ENCODE measurements at regions of chr14 and their contacts with region 1.

Region 1: DNA sequence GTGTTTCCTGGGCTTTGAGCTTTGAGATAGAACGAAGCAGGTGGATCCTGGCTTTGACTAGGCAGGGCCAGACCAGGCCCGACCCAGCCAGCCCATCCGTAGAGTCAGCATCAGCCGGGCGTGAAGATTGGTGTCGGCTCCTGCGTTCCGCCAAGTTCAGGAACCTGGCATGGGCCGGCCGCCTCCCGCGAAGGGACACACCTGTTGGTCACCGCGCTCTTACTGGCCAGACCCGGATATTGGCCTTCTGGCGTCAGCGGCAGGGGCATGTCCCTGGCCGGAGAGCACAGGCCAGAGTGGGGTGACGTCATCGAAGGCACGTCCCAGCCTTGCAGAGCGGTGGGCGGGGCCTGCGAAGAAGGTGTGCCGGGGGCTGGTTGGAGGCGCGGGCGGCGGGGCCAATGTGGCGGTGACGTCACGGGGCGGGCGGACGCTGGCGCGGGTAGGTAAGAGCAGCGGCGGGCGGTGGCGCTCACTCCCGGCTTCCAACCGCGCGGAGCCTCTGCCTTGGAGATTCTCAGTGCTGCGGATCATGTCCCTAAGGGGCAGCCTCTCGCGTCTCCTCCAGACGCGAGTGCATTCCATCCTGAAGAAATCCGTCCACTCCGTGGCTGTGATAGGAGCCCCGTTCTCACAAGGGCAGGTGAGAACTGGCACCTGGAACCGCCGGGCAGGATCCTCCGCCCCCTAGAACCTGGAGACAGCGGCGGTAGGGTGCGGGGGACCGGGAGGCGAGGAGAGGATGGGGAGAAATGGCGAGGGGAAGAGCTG is at the start of gene ARG2:
- DNase-seq: peak; percentile 83
- H3K4me3 ChIP-seq: peak within 1 kb of the TSS; percentile 50 to 88 (median 63)
- H3K27ac ChIP-seq: peak within 1 kb of the TSS; percentile 77 to 88 (median 84)
- H3K4me1 ChIP-seq: peaks cover 0 to 41% (median 25%) of the 10 kb centered on the region in 3 donors
- H3K27me3 ChIP-seq: no peaks in the 10 kb centered on the region
- CTCF ChIP-seq: peak in 1 of 6 experiments; percentile 6
- POLR2A ChIP-seq: peak in 2 of 4 donors; percentile 56 to 89
- total RNA-seq, gene ARG2: 7.1 to 50.6 (median 17.7) TPM

Region 2: DNA sequence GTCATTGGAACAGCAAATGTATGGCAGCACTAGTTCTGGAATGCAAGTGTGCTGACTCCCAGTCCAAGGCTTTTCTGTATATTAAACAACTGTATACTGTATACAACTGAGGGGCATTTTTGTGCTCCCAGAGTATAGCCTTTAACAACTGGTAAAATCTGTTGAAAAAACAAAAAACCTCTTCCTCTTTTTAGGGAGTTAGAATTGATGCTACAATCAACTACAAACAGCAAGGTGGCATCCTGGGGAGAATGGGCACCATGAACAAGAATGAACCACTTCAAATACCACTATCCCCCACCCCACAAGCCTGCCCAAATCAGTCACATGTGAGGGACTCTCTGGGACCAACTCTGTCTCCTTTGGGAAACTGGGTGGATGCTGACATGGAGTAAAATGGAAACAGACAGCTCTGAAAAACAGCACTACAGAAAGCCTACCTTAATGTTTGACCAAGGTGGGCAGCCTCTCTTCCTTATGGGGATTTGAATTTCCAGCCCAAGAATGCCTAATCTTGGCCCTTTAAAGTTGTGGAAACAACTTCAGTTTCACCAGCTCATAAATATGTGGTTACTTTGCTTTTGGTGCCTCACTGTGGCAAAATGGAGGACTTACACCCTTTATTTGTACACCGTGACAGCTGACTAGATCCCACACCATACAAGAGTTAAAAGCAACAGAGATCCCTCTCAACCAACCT is 47.3 kb after region 1 on chr14:
- intact Hi-C with region 1: loop called (anchors 10 kb)
- DNase-seq: no peak
- H3K4me3 ChIP-seq: no peak overlapping the region
- H3K27ac ChIP-seq: no peak overlapping the region
- H3K4me1 ChIP-seq: peaks cover 0 to 55% (median 20%) of the 10 kb centered on the region in 3 donors
- H3K27me3 ChIP-seq: no peaks in the 10 kb centered on the region
- CTCF ChIP-seq: peak; percentile 38 to 76 (median 55)
- POLR2A ChIP-seq: no peak

Region 3: GRCh38 chr14:67704484-67705089 is 85.0 kb after region 1 on chr14:
- intact Hi-C with region 1: loop called (anchors 10 kb)
- DNase-seq: no peak
- H3K4me3 ChIP-seq: no peak overlapping the region
- H3K27ac ChIP-seq: no peak overlapping the region
- H3K4me1 ChIP-seq: peaks cover 0 to 10% (median 0%) of the 10 kb centered on the region in 3 donors
- H3K27me3 ChIP-seq: no peaks in the 10 kb centered on the region
- CTCF ChIP-seq: peak; percentile 27 to 77 (median 60)
- POLR2A ChIP-seq: no peak

Region 4: DNA sequence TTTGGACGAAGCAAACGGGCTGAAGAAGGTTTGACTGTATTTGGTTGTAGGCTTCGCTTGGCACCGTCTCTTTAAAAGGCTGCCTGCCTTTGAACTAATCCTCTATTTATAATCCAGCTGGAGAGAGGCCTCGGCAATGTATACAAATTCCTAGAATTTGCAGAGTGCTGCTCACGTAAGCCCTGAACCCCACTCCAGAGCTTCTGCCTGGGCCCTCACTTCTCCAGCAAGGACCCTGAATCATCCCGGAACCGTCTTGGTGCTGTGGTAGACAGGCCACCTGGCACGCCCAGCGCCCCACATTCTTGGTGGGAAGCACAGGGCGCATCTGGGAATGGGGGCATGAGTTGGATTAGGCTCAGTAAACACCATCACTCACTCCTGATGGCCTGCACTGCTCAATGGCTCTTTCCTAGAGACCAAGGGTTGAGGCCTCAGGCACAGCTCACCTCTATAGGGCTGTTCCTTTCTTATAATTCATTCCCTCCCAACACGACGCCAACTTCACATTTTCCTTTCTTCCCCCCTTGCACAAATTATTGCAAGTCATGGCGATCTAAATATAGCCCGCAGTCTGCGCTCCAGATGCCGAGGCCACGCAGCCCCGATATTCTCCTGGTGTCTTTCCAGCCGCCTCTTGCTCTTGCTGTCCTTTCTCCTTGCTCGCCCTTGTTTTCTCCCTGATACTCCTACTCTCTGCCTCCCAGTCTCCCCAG is 1032.2 kb after region 1 on chr14:
- intact Hi-C with region 1: no loop called
- DNase-seq: no peak
- H3K4me3 ChIP-seq: no peak overlapping the region
- H3K27ac ChIP-seq: peak overlapping the region; percentile 70 to 88 (median 82)
- H3K4me1 ChIP-seq: peaks cover 18 to 69% (median 20%) of the 10 kb centered on the region in 3 donors
- H3K27me3 ChIP-seq: no peaks in the 10 kb centered on the region
- CTCF ChIP-seq: no peak
- POLR2A ChIP-seq: no peak

Measured in esophagus squamous epithelium (tissue), 5 donors.